ENCODE measurements at regions of chr18 and their contacts with region 1.

Region 1: DNA sequence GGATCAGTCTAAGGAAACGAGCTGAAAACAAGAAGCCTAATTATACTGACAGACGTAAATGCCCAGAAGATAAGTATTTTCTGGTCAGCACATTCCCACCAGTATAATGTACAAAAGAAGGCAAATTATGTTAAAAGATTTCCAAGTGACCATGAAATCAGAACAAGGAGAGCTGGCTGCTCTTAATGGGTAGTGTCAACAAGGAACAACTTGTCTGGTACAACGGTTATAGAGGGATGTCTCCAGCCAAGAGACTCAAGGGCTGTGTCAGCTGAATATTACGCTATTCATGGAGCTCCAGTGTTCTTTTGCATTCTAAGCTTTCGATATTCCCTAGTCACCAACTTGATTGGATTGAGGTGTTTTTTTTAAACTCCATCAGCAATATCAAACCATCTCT is 8.6 kb upstream of the L3MBTL4 start:
- DNase-seq: no peak
- ATAC-seq: no peak

Region 2: DNA sequence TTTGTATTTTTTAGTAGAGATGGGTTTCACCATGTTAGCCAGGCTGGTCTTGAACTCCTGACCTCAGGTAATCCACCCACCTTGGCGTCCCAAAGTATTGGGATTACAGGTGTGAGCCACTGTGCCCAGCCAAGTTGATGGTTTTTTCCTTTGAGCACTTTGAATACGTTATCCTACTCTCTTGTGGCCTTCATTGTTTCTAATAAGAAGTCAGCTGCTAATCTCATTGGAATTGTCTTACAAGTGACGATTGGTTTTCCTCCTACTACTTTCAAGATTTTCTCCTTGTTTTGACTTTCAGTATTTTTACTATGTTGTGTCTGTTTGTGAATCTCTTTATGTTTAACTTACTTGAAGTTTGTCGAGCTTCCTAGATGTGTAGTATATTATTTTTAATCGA is 616.4 kb before region 1 on chr18:
- intact Hi-C with region 1: loop called (anchors 5 kb)
- DNase-seq: no peak
- ATAC-seq: no peak

Region 3: DNA sequence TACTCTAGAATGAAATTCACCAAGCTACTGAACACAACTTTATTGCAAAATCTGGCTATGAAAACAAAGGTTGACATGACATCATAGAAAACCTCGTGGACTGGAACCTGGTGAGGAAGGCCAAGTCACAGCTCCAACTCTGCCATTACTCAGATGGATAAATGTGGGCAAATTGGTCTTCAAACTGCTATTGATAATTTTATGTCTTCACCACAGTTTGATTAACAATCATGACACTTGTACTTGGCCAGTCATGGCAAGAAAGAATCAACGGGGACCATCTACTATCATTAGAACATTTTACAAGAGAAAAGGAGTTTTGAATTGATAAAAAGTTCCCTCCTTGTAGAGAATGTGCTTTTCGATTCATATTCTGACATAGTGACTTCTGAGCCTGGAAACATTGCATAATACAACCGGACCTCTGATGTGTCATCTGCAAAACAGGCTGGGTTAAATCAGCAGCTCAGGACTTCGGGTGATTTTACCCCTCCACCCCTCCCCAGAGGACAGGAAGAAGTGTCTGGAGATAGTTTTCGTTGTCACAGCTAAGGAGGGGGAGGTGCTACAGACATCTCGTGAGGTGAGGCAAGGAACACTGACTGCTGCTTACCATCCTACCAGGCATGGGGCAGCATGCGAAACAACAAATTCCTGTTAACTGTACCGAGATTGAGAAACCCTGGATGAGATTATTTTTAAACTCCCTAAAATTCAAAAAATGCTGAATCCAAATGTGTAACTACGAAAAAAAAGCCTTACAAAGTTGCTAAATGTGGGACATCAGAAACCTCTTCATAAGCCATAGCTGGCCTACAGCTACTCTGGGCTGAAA is 17.0 kb before region 1 on chr18:
- intact Hi-C with region 1: no loop called
- DNase-seq: no peak
- ATAC-seq: peak; percentile 74

Measured in sciatic nerve (tissue), 2 donors.